ENCODE measurements at regions of chr19 and their contacts with region 1.

Region 1: DNA sequence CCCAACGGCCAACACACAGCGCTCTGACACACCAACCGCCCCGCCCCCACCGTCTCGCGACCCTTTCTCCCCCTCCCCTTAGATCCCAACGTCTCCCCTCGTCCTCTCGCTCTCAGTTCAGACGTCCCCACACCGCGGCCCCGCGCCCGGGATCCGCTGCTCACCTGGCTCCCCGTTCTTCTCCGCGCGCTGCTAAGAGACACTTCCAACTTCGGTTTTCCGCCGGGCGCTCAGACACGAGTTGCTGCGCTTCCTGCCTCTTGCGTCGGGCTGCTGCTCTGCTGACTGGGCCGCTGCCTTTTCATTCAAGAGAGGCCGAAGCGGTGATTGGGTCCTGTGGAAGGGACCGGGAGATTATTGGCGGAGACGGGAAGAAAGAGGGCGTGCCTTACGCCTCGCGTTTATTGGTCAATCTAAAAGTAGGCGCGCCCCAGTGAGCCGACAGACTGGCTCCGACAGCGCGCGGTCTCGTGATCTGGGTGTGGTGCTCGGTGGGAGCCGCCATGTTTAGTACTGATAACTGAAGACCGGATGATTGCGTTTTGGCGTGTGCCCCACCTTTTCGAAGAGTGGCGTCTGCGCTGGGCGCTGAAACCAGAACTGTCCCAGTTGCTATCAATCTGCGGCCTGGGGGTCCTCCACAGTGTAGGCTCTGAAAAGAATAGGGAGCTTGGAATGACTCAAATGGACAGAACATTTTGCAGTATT is at the start of gene DDX39A:
- DNase-seq: peak; percentile 93 to 99 (median 98)
- H3K4me3 ChIP-seq: peak within 1 kb of the TSS; percentile 71 to 99 (median 91)
- H3K27ac ChIP-seq: peak within 1 kb of the TSS; percentile 76 to 97 (median 92)
- H3K27me3 ChIP-seq: no peaks in the 10 kb centered on the region
- CTCF ChIP-seq: peak in 10 of 56 donors; percentile 3 to 32 (median 12)
- total RNA-seq, gene DDX39A: 17.5 to 45.6 (median 29.1) TPM

Region 2: DNA sequence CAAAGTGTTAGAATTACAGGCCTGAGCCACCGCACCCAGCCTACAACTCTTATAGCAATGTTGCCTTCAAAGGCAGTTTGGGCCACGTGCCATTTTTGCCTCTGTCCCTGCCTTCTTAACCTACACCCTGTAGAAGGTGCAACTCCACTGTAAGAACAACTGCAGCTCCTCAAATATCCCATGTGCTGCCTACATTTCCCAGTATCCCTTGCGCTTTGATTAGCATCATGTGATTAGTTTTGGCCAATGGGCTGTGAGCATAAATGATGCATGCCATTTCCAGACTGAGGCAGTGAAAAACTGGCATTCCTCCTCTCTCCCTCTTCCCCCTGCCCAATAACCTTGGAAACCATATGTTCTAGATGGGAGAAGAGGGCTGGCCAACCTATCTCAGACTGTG is 730.2 kb before region 1 on chr19:
- intact Hi-C with region 1: no loop called
- DNase-seq: peak in 1 of 10 donors; percentile 19
- H3K4me3 ChIP-seq: no peak overlapping the region
- H3K27ac ChIP-seq: no peak overlapping the region
- H3K27me3 ChIP-seq: no peaks in the 10 kb centered on the region
- CTCF ChIP-seq: no peak

Region 3: DNA sequence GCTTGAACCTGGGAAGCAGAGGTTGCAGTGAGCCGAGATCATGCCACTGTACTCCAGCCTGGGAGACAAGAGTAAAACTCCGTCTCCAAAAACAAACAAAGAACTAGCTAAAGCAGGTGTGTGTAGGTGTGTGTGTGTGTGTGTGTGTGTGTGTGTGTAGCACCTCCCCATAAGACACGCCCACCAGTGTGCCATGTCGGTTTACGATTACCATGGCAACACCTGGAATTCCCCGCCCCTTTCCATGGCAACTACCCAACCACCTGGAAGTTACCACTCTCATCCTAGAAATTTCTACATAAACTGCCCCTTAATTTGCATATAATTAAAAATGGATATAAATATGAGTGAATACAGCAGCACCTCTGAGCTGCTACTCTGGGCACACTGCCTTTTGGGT is 119.0 kb before region 1 on chr19:
- intact Hi-C with region 1: no loop called
- DNase-seq: no peak
- H3K4me3 ChIP-seq: no peak overlapping the region
- H3K27ac ChIP-seq: no peak overlapping the region
- H3K27me3 ChIP-seq: no peaks in the 10 kb centered on the region
- CTCF ChIP-seq: no peak

Region 4: GRCh38 chr19:14366498-14366915 is 52.8 kb before region 1 on chr19:
- intact Hi-C with region 1: no loop called
- DNase-seq: peak in 7 of 10 donors; percentile 40 to 71 (median 58)
- H3K4me3 ChIP-seq: no peak overlapping the region
- H3K27ac ChIP-seq: no peak overlapping the region
- H3K27me3 ChIP-seq: no peaks in the 10 kb centered on the region
- CTCF ChIP-seq: no peak

Region 5: DNA sequence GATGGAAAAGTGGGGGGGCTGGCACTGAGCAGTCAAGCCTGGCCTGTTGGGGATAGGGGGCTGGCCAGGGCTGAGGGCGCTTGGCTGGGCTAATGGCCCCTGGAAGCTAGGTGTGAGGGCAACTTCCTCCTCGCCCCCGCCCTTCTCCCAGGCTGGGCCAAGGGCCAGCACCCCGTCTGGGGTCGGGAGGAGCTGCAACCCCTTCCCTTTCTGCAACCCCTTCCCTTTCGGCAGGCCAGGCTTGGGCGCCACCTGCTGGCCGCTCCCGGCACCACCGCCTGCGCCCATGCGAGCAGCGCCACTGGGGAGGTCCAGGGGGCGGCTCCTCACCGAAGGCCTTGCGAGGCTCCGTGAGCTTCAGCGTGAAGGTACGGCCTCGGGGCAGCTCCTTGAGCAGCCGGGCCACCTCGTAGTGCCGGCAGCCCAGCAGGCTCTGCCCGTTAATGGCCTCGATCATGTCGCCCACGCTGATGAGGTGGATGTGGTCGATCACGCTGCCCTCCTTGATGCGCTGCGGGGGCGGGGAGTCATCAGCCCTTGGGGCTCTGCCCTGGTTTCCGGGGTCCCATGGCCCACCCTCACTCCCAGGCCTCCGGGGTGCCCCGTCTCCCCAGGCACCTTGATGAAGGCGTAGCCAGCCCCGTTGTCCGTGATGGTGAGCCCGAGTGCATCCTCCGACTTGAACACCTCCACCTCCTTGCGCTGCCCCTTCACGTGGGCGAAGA is 60.9 kb after region 1 on chr19:
- intact Hi-C with region 1: loop called in 1 of 2 experiments (anchors 5 kb)
- DNase-seq: peak in 5 of 10 donors; percentile 17 to 67 (median 42)
- H3K4me3 ChIP-seq: peak overlapping the region in 2 of 59 donors; percentile 15 to 24
- H3K27ac ChIP-seq: peak overlapping the region in 7 of 59 donors; percentile 2 to 44 (median 31)
- H3K27me3 ChIP-seq: peaks cover 0 to 2% (median 0%) of the 10 kb centered on the region in 45 donors
- CTCF ChIP-seq: peak in 55 of 56 donors; percentile 39 to 92 (median 83)

Region 6: DNA sequence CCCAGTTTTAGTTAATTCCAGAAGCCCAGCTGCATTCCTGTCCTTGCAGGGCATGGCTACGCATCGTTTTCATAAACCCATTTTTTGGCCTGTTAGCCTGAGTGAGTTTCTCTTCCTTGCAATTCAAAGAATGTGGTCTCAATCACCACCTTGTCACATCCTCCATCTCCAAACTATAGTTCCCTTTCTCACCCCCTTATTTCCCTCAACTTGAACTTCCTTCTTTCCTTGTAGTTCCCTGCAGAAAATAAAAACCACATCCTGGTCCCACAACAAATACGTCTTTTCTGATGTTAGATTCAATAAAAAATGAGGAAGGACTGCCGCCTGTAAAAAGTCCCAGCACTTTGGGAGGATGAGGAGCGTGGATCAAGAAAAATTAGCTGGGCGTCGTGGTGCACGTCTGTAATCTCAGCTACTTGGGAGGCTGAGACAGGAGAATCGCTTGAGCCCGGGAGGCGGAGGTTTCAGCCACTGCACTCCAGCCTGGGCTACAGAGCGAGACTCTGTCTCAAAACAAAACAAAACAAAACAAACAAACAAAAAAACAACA is 242.2 kb after region 1 on chr19:
- intact Hi-C with region 1: no loop called
- DNase-seq: no peak
- H3K4me3 ChIP-seq: no peak overlapping the region
- H3K27ac ChIP-seq: no peak overlapping the region
- H3K27me3 ChIP-seq: peaks cover 0 to 3% (median 0%) of the 10 kb centered on the region in 45 donors
- CTCF ChIP-seq: no peak